Activated T-helper 1 cell treated with anti-CD3 and anti-CD28 coated beads, Interleukin-12 subunit alpha, Interleukin-12 subunit beta, Interleukin-2, Interleukin-4 antibody, amounts not matched to agents 30 ng/mL and 10 ng/mL and 1 ng/mL, durations not matched to agents 14 hours and 24 hours and 36 hours (primary cell): ENCODE measurements at regions of chr18 and their contacts with region 1.

Region 1: DNA sequence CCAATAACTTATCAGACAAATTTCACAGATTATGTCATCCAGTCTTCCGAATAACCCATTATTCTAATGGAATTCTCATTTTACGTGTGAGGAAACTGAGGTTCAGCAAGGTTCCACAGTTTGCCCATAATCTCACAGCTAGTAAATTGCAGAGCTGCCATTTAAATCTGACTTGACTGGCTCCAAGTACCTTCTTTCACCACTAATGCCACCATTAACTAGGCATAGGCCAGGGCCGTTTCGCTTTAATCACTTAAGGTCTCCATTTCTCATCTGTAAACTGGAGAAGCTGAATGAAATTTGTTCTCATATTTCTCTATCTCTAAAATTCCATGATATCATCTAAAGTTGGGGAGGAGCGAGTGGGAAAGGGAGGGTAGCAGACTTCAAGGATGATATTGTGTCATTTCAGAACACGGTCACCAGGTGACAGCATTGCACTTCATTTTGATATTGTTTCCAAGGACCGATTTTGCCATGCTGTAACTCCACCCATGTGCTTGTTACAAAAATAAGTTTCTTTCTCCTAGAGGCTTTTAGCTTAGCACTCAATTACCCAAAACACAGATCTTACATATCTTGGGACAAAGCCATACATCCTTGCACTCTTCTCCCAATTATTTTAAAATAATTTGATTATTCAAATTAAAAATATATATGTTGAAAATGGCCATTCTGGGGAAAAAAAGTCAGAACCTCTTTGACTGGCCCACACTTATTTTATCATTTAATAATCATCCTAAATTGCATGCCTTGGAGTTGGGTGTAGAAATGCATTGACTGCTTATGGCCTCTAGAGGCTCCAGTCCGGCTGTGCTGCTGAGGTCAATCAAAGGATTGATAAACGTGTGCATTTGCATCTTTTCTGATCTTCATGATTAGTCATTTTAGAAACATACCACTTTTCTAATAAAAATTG is 123.8 kb downstream of the AKAIN1 start:
- DNase-seq: no peak
- H3K4me3 Mint-ChIP-seq: no peak overlapping the region
- H3K27ac Mint-ChIP-seq: no peak overlapping the region
- H3K4me1 Mint-ChIP-seq: no peaks in the 10 kb centered on the region
- H3K27me3 Mint-ChIP-seq: peaks cover 13% of the 10 kb centered on the region

Region 2: GRCh38 chr18:5334456-5335075 is 261.3 kb after region 1 on chr18:
- intact Hi-C with region 1: no loop called
- DNase-seq: no peak
- H3K4me3 Mint-ChIP-seq: no peak overlapping the region
- H3K27ac Mint-ChIP-seq: no peak overlapping the region
- H3K4me1 Mint-ChIP-seq: no peaks in the 10 kb centered on the region
- H3K27me3 Mint-ChIP-seq: no peaks in the 10 kb centered on the region

Region 3: GRCh38 chr18:5424903-5425664 is 351.8 kb after region 1 on chr18:
- intact Hi-C with region 1: loop called (anchors 10 kb)
- DNase-seq: no peak
- H3K4me3 Mint-ChIP-seq: no peak overlapping the region
- H3K27ac Mint-ChIP-seq: no peak overlapping the region
- H3K4me1 Mint-ChIP-seq: no peaks in the 10 kb centered on the region
- H3K27me3 Mint-ChIP-seq: no peaks in the 10 kb centered on the region

Region 4: GRCh38 chr18:5868218-5869115 is 795.2 kb after region 1 on chr18:
- intact Hi-C with region 1: loop called (anchors 5 kb)
- DNase-seq: peak; percentile 14
- H3K4me3 Mint-ChIP-seq: no peak overlapping the region
- H3K27ac Mint-ChIP-seq: no peak overlapping the region
- H3K4me1 Mint-ChIP-seq: no peaks in the 10 kb centered on the region
- H3K27me3 Mint-ChIP-seq: no peaks in the 10 kb centered on the region

Region 5: GRCh38 chr18:5890331-5891183 is 817.3 kb after region 1 on chr18:
- intact Hi-C with region 1: loop called (anchors 10 kb)
- DNase-seq: no peak
- H3K4me3 Mint-ChIP-seq: no peak overlapping the region
- H3K27ac Mint-ChIP-seq: no peak overlapping the region
- H3K4me1 Mint-ChIP-seq: no peaks in the 10 kb centered on the region
- H3K27me3 Mint-ChIP-seq: peaks cover 66% of the 10 kb centered on the region

Region 6: GRCh38 chr18:6521795-6522418 is 1448.6 kb after region 1 on chr18:
- intact Hi-C with region 1: loop called (anchors 10 kb)
- DNase-seq: peak; percentile 3
- H3K4me3 Mint-ChIP-seq: no peak overlapping the region
- H3K27ac Mint-ChIP-seq: no peak overlapping the region
- H3K4me1 Mint-ChIP-seq: no peaks in the 10 kb centered on the region
- H3K27me3 Mint-ChIP-seq: no peaks in the 10 kb centered on the region